Spleen (tissue), 13 donors: ENCODE measurements at regions of chr13 and their contacts with region 1.

Region 1: DNA sequence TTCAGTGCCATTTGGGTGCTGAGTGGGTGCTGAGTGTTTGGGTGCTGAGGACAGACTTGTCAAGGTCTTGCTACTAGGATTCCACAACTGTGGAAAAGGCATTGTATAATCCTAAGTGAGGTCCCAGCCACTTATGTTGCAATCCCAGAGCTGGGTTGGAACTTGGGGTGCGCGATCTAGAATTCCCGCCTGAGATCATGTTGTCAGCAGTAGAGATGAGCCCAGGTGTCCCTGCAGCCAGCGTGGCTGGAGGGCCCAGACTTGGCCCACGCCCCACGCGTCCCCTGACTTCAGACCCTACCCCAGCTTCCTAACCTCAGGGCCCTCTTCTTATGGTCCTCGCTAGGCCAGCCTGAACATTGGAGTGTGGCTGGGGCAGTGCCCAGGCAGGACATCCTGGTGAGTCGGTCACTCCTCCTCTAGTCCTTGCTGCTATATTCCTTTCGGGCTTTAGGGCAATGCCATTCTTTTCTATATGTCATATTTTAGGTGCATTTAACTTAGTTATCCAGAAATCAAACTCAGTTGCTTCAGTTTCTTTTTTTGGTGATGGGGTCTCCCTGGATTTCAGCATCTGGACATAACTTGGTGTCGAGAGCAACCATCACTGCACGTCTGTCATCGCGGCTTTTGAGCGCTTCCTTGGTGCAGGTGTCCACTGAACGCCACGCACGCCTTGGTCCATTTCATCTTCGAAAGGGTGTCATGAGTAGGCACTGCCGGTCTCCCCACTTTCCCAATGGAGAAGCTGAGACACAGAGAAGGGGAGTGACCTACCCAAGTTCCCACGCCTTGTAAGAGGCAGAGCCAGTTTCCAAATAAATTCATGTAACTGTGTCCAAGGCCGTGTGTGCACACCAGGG is 46.4 kb upstream of the F7 start:
- DNase-seq: peak; percentile 59
- H3K4me3 ChIP-seq: no peak overlapping the region
- H3K27ac ChIP-seq: no peak overlapping the region
- H3K4me1 ChIP-seq: no peaks in the 10 kb centered on the region
- H3K27me3 ChIP-seq: peaks cover 0 to 4% (median 0%) of the 10 kb centered on the region in 7 donors
- CTCF ChIP-seq: no peak
- POLR2A ChIP-seq: no peak

Region 2: GRCh38 chr13:113001241-113002140 is 57.7 kb before region 1 on chr13:
- intact Hi-C with region 1: no loop called
- DNase-seq: no peak
- H3K4me3 ChIP-seq: peak overlapping the region in 3 of 8 donors; percentile 7 to 42 (median 24)
- H3K27ac ChIP-seq: no peak overlapping the region
- H3K4me1 ChIP-seq: peaks cover 0 to 19% (median 5%) of the 10 kb centered on the region in 6 donors
- H3K27me3 ChIP-seq: peaks cover 0 to 52% (median 5%) of the 10 kb centered on the region in 7 donors
- CTCF ChIP-seq: no peak
- POLR2A ChIP-seq: no peak

Region 3: DNA sequence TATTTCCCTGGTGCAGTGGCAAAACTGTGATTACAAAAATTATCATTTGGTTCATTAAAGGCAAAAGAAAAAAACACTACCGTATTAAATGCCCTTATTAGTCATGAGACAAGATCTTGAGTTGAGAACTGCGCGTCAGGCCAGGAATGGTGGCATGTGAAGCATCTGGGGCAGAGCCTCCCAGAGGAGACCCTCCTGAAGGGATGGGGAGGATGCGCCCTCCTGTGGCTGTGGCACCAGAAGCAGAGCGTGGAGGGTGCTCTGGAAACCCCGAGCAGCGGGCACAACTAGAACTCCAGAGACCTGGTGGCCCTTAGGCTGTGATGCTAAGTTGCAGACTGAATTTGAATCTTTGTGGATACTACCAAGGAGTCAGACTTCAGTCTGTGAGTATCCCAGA is 161.7 kb after region 1 on chr13:
- intact Hi-C with region 1: loop called (anchors 10 kb)
- DNase-seq: peak; percentile 12
- H3K4me3 ChIP-seq: no peak overlapping the region
- H3K27ac ChIP-seq: no peak overlapping the region
- H3K4me1 ChIP-seq: peaks cover 0 to 24% (median 9%) of the 10 kb centered on the region in 6 donors
- H3K27me3 ChIP-seq: no peaks in the 10 kb centered on the region
- CTCF ChIP-seq: peak in 1 of 11 experiments; percentile 29
- POLR2A ChIP-seq: no peak